Prostate gland (tissue), 2 donors: ENCODE measurements at regions of chr11 and their contacts with region 1.

Region 1: DNA sequence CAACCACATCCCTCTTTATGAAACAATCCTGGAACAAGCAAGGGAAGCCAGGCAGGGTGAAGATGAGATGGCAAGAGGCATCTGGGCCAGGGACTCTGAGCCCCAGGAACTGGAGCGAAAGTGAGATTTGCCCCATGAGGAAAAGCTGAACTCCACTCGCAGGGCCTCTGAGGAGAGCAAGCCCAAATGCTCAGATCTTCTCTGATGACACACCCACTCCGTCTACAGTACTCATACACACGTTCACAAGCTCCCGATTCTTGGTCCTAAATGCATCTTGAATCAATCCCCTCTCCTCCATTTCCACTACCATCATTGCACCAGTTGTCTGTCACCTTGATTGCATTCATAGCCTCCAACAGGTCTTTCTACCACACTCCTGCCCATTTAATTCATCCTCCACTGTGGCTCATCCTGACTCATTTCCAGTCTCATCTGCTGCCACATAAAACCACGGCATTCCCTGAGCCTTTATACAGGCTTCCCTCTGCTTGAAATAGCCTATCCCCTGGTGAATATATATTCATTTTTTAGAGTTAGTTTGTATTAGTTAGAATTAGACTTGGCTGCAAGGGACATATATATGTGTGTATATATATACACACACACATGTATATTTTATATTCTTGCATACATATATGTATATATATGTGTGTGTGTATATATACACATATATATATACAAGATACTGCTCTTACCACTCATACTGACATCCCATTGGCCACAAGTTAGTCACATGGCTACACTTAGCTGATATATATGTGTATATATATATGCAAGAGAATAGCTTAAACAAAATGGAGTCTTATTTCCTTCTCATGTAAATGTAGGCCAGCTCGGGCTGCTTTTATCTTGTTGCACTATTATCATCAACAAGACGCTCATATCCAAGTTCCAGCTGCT is 1.4 kb upstream of the APOA5 start:
- DNase-seq: no peak
- H3K4me3 ChIP-seq: no peak overlapping the region
- H3K27ac ChIP-seq: no peak overlapping the region
- H3K4me1 ChIP-seq: no peaks in the 10 kb centered on the region
- H3K27me3 ChIP-seq: no peaks in the 10 kb centered on the region
- CTCF ChIP-seq: no peak
- POLR2A ChIP-seq: no peak

Region 2: DNA sequence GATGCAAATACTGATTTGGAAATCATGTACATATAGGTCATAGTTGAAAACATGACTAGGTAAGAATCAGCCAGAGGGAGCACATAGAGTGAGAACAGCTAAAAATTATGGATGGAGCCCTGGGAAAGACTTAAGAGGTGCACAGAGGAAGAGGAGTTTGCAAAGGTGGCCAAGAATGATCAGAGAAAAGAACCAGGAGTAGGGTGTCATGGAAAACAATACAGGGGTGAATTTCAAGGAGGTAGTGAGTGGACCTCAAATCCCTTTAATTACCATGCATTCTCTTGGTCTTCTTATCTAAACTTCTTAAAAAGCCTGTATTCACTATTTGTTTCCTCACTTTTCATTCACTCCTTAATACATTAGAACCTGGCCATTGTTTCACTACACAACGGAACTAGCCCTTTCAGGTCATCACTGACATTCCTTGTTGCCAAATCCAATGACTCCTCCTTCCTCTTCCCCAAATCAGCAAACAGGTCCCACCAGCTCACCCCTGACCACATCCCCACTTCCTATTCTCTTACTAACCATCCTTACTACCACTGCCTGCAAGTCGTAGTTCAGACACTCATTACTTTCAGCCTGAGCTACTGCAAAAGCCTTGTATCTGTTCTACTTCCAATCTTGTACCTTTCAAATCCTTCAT is 42.9 kb before region 1 on chr11:
- intact Hi-C with region 1: no loop called
- DNase-seq: no peak
- H3K4me3 ChIP-seq: no peak overlapping the region
- H3K27ac ChIP-seq: no peak overlapping the region
- H3K4me1 ChIP-seq: no peaks in the 10 kb centered on the region
- H3K27me3 ChIP-seq: no peaks in the 10 kb centered on the region
- CTCF ChIP-seq: no peak
- POLR2A ChIP-seq: no peak

Region 3: DNA sequence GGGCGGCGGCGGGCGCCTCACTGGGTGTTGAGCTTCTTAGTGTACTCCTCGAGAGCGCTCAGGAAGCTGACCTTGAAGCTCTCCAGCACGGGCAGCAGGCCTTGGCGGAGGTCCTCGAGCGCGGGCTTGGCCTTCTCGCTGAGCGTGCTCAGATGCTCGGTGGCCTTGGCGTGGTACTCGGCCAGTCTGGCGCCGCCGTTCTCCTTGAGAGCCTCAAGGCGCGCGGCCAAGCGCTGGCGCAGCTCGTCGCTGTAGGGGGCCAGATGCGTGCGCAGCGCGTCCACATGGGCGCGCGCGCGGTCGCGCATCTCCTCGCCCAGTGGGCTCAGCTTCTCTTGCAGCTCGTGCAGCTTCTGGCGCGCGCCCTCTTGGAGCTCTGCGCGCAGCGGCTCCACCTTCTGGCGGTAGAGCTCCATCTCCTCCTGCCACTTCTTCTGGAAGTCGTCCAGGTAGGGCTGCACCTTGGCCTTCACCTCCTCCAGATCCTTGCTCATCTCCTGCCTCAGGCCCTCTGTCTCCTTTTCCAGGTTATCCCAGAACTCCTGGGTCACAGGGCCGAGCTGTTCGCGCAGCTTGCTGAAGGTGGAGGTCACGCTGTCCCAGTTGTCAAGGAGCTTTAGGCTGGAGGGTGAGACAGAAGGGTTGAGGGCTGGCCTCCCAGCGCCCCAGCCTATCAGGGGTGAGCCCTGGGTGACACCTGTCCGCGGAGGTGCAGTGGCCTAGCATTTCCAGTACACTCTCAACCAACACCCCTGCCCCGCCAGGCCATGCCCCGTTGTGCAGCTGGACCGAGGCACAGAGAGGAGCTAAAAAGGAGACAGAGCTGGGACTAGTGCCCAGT is 42.9 kb after region 1 on chr11:
- intact Hi-C with region 1: loop called (anchors 2 kb)
- DNase-seq: peak; percentile 78
- H3K4me3 ChIP-seq: peak overlapping the region; percentile 6 to 11
- H3K27ac ChIP-seq: peak overlapping the region; percentile 37 to 48
- H3K4me1 ChIP-seq: no peaks in the 10 kb centered on the region
- H3K27me3 ChIP-seq: no peaks in the 10 kb centered on the region
- CTCF ChIP-seq: peak in 3 of 4 experiments; percentile 69 to 78 (median 76)
- POLR2A ChIP-seq: no peak

Region 4: GRCh38 chr11:116861539-116861938 is 68.4 kb after region 1 on chr11:
- intact Hi-C with region 1: no loop called
- DNase-seq: no peak
- H3K4me3 ChIP-seq: no peak overlapping the region
- H3K27ac ChIP-seq: no peak overlapping the region
- H3K4me1 ChIP-seq: no peaks in the 10 kb centered on the region
- H3K27me3 ChIP-seq: no peaks in the 10 kb centered on the region
- CTCF ChIP-seq: no peak
- POLR2A ChIP-seq: no peak